ENCODE measurements at regions of chr4 and their contacts with region 1.

Region 1: GRCh38 chr4:128454281-128455075 is 166.9 kb upstream of the PGRMC2 start:
- DNase-seq: peak; percentile 81 to 92 (median 92)
- H3K4me3 ChIP-seq: no peak overlapping the region
- H3K27ac ChIP-seq: no peak overlapping the region
- H3K4me1 ChIP-seq: no peaks in the 10 kb centered on the region
- H3K27me3 ChIP-seq: no peaks in the 10 kb centered on the region

Region 2: GRCh38 chr4:128468123-128468989 is 13.9 kb after region 1 on chr4:
- CTCF ChIA-PET with region 1: interaction called, 17 read pairs
- POLR2A ChIA-PET with region 1: no interaction called
- DNase-seq: peak; percentile 30 to 80 (median 61)
- H3K4me3 ChIP-seq: no peak overlapping the region
- H3K27ac ChIP-seq: no peak overlapping the region
- H3K4me1 ChIP-seq: peaks cover 0 to 5% (median 0%) of the 10 kb centered on the region in 4 experiments
- H3K27me3 ChIP-seq: no peaks in the 10 kb centered on the region

Measured in common myeloid progenitor, CD34-positive (primary cell).